PC-3 (cell line): ENCODE measurements at regions of chr14 and their contacts with region 1.

Region 1: DNA sequence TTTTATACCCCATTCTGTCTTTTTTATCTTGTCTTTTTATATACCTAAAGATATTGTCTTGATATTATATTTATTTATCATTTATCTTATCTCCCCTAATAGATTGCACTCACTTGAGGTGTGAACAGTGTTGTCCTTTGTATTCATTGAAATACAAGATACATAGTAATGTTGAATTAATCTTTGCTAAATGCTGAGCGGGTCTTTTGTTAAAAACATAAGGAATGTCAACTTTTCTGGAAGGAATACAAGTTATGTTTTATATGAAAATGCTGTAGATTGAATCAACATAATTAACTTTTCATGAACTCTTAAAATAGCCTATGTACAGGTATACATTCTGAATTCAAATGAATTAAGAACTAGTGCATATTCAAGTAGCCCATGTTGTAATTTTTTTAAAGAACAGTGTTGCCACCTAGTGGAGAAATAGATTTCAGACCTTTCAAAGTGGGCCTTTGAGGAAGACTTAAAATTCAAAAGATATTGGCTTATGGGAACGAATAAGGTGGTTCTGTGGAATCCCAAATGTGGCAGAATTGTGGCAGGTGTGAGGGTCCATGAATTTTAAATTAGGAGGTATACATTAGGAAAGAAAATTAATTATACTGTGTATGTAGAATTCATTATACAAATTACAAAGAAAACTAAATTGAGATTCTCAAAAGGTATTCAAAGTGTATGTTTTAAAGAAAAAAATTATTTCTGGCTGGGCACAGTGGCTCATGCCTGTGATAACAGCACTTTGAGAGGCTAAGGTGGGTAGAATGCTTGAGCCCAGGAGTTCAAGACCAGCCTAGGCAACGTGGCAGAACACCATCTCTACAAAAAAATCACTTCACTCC is 19.1 kb downstream of the BBOF1 start:
- DNase-seq: peak; percentile 84
- ATAC-seq: peak; percentile 59
- H3K4me3 ChIP-seq: no peak overlapping the region
- H3K27ac ChIP-seq: no peak overlapping the region
- H3K4me1 ChIP-seq: no peaks in the 10 kb centered on the region
- H3K27me3 ChIP-seq: no peaks in the 10 kb centered on the region
- CTCF ChIP-seq: peak; percentile 89

Region 2: GRCh38 chr14:73728717-73729330 is 309.4 kb before region 1 on chr14:
- CTCF ChIA-PET with region 1: no interaction called
- POLR2A ChIA-PET with region 1: no interaction called
- intact Hi-C with region 1: loop called (anchors 10 kb)
- DNase-seq: peak; percentile 88
- ATAC-seq: peak; percentile 52
- H3K4me3 ChIP-seq: no peak overlapping the region
- H3K27ac ChIP-seq: no peak overlapping the region
- H3K4me1 ChIP-seq: peaks cover 37% of the 10 kb centered on the region
- H3K27me3 ChIP-seq: no peaks in the 10 kb centered on the region
- CTCF ChIP-seq: peak; percentile 94

Region 3: DNA sequence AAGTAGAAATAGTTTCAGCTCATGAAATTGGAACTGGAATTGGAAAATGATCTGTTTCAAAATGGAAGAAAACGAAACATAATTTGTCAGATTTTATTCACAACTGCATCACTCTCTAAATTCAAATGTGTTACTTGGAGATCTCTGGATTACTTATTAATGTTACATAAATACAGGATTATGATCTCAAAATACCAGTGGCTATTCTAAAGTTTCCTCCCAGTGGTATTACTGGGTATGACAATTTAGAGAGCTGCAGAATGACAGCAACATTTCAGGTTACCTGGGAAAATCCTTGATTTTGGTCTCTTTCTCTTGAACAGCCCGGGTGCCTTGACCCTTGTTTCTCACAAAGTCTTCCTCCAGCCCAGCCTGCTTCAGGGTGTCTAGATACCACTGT is 102.6 kb before region 1 on chr14:
- CTCF ChIA-PET with region 1: no interaction called
- POLR2A ChIA-PET with region 1: no interaction called
- intact Hi-C with region 1: loop called (anchors 1 kb)
- DNase-seq: peak; percentile 63
- ATAC-seq: peak; percentile 53
- H3K4me3 ChIP-seq: no peak overlapping the region
- H3K27ac ChIP-seq: no peak overlapping the region
- H3K4me1 ChIP-seq: no peaks in the 10 kb centered on the region
- H3K27me3 ChIP-seq: no peaks in the 10 kb centered on the region
- CTCF ChIP-seq: peak; percentile 56; the same call in 1 of the 2 replicates

Region 4: DNA sequence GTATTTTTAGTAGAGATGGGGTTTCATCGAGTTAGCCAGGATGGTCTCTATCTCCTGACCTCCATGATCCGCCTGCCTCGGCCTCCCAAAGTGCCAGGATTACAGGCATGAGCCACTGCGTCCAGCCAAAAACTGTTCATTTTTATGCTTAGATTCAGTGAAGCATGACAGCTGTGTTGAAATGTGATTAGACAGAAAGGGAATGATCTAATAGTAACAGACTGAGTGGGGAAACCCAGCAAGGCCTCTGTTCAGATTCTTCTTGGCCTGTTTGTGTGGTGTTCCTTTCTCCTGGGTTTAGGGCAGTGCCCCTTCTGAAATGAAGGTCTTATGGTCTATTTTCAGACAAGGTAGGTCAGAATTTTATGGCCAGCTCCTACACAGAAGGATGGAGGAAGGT is 276.3 kb after region 1 on chr14:
- CTCF ChIA-PET with region 1: no interaction called
- POLR2A ChIA-PET with region 1: no interaction called
- intact Hi-C with region 1: no loop called
- DNase-seq: no peak
- ATAC-seq: no peak
- H3K4me3 ChIP-seq: no peak overlapping the region
- H3K27ac ChIP-seq: no peak overlapping the region
- H3K4me1 ChIP-seq: no peaks in the 10 kb centered on the region
- H3K27me3 ChIP-seq: no peaks in the 10 kb centered on the region
- CTCF ChIP-seq: no peak